HepG2 (cell line): ENCODE measurements at regions of chr20 and their contacts with region 1.

Region 1: DNA sequence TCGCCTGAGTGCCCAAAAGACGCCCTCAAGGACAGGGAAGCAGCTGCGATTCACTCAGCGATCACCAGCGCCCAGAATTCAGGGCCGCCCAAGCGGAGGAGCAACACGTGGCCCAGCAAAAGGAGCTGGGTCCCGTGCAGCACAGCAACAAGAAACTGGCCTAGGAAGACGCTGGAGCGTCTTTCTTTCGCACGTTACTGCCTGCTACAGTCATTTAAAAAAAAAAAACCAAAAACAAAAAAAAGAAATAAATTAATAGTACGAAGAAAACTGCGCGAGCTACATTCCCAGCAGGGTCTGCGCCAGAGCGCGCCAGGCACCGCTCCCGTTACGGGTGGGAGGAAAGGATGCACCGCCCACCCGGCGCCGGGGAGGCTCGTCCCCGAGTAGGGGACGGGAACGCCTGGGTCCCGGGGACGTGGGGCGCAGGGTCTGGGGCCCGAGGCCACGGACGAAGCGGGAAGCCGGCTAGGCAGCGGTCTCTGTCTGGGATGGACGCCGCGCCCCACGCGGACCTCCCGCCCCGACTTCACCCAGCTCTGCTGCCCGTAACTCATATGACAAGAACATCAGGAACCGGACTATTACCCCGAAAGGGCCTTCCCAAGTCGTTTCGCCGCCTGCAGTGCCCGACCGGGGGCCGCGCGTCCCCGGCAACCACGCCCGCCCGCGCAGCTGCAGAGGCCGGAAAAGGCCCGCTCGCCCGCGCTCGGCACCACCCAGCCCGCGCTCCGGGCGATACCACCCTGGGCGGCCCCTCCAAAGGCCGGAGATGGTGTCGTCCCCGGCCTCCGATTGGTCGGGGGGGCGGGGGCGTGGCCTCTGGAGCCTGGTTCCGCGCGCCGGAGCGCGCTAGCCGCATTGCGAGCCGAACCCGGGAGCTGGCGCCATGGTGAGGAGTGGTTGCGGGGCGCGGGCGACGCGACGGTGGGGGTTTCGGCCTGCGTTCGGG is at the start of gene NOP56:
- DNase-seq: peak; percentile 88
- ATAC-seq: peak; percentile 93
- H3K4me3 ChIP-seq: peak within 1 kb of the TSS; percentile 83 to 97 (median 94)
- H3K27ac ChIP-seq: peak within 1 kb of the TSS; percentile 90
- H3K4me1 ChIP-seq: peaks cover 43% of the 10 kb centered on the region
- H3K27me3 ChIP-seq: no peaks in the 10 kb centered on the region; a peak in 1 of 5 replicates
- CTCF ChIP-seq: no peak; the same call in 1 of the 2 replicates
- EP300 ChIP-seq: peak in 1 of 2 experiments; percentile 50; a peak in 2 of 4 replicates
- POLR2A ChIP-seq: peak; percentile 91 to 99
- RAD21 ChIP-seq: peak; percentile 59
- total RNA-seq, gene NOP56: 646 and 1,116 TPM in 2 replicates

Region 2: DNA sequence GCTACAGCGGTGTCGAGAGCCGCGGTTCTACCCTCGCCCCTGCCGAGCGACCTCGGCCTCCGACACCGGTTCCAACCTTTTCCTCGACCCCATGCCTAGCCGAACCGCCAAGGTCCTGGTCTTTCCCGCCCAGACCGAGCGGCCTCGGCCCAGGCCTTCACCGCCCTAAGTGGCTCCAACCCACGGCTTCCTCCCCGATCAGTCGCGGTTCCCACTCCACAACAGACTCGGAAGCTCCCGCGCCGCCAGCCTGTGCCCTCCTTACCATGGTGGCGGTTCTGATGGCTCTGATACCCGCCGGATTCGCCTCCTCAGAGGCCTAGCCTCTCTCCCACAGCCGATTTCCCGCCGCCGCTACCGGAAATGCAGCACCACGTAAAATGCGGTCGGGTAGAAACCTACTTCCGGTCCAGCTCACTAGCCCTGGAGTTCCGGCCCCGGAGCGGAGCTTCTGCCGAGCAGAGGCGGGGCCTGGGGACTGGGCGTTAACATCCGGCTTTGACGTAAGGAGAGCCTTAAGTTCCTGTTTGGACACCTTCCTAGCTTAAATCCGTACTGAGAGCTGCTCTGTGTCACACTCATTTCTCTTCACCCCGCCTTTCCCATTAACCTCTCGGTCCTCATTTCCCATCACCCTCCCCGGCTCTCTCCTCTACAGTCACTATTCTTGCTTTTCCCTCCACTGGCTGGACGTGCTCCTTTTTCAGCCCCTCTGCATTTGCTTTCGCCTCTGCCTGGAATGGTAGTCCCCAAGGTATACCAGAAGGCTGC is 181.4 kb before region 1 on chr20 and contains the start of gene SNRPB:
- CTCF ChIA-PET with region 1: no interaction called
- POLR2A ChIA-PET with region 1: interaction called, 34 read pairs
- in situ Hi-C with region 1: no loop called
- intact Hi-C with region 1: loop called (anchors 5 kb)
- DNase-seq: peak; percentile 99
- ATAC-seq: peak; percentile 98
- H3K4me3 ChIP-seq: peak within 1 kb of the TSS; percentile 89 to 93 (median 90)
- H3K27ac ChIP-seq: peak within 1 kb of the TSS; percentile 89
- H3K4me1 ChIP-seq: peaks cover 52% of the 10 kb centered on the region
- H3K27me3 ChIP-seq: no peaks in the 10 kb centered on the region; a peak in 1 of 5 replicates
- CTCF ChIP-seq: peak; percentile 31
- EP300 ChIP-seq: peak; percentile 16 to 73; a peak in 2 of 4 replicates
- POLR2A ChIP-seq: peak; percentile 99 to 100
- RAD21 ChIP-seq: peak; percentile 71
- total RNA-seq, gene SNRPB: 778 and 844 TPM in 2 replicates

Region 3: GRCh38 chr20:2508631-2509467 is 143.2 kb before region 1 on chr20 and contains the start of gene ZNF343:
- CTCF ChIA-PET with region 1: no interaction called
- POLR2A ChIA-PET with region 1: interaction called, 11 read pairs
- in situ Hi-C with region 1: no loop called
- intact Hi-C with region 1: loop called (anchors 5 kb)
- DNase-seq: peak; percentile 95
- ATAC-seq: peak; percentile 98
- H3K4me3 ChIP-seq: peak within 1 kb of the TSS; percentile 88 to 96 (median 91)
- H3K27ac ChIP-seq: peak within 1 kb of the TSS; percentile 79
- H3K4me1 ChIP-seq: peaks cover 23% of the 10 kb centered on the region
- H3K27me3 ChIP-seq: peaks cover 2 to 5% of the 10 kb centered on the region in 2 experiments; a peak in 3 of 5 replicates
- CTCF ChIP-seq: peak; percentile 44
- EP300 ChIP-seq: no peak; a peak in 1 of 4 replicates
- POLR2A ChIP-seq: peak; percentile 94 to 95
- RAD21 ChIP-seq: peak; percentile 33; the same call in 1 of the 2 replicates
- total RNA-seq, gene ZNF343: 22.1 and 28.8 TPM in 2 replicates

Region 4: DNA sequence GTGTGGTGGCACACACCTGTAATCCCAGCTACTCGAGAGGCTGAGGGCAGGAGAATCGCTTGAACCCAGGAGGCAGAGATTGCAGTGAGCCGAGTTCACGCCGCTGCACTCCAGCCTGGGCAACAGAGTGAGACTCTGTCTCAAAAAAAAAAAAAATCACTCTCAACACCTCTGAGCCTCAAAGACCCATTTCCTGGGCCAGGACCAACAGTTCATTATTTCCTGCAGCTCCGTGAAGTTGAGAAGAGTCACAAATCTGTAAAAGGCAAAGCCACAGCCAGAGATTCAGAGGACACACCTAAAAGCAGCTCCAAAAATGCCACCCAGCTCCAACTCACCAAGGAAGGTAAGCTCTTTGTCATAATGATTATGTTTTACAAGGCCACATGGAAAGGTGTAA is 14.8 kb before region 1 on chr20:
- CTCF ChIA-PET with region 1: no interaction called
- POLR2A ChIA-PET with region 1: interaction called, 15 read pairs
- in situ Hi-C with region 1: no loop called
- intact Hi-C with region 1: no loop called
- DNase-seq: no peak
- ATAC-seq: no peak
- H3K4me3 ChIP-seq: no peak overlapping the region
- H3K27ac ChIP-seq: no peak overlapping the region
- H3K4me1 ChIP-seq: no peaks in the 10 kb centered on the region
- H3K27me3 ChIP-seq: peaks cover 0 to 12% of the 10 kb centered on the region in 2 experiments; a peak in 2 of 5 replicates
- CTCF ChIP-seq: no peak
- EP300 ChIP-seq: no peak
- POLR2A ChIP-seq: no peak
- RAD21 ChIP-seq: no peak

Region 5: GRCh38 chr20:2688041-2688591 is 36.1 kb after region 1 on chr20:
- CTCF ChIA-PET with region 1: no interaction called
- POLR2A ChIA-PET with region 1: interaction called, 10 read pairs
- in situ Hi-C with region 1: no loop called
- intact Hi-C with region 1: no loop called
- DNase-seq: no peak
- ATAC-seq: peak; percentile 31; the same call in 2 of the 3 replicates
- H3K4me3 ChIP-seq: peak overlapping the region in 1 of 3 experiments; percentile 18; a peak in 1 of 6 replicates
- H3K27ac ChIP-seq: no peak overlapping the region
- H3K4me1 ChIP-seq: peaks cover 16% of the 10 kb centered on the region
- H3K27me3 ChIP-seq: peaks cover 15 to 68% of the 10 kb centered on the region in 2 experiments
- CTCF ChIP-seq: peak; percentile 74
- EP300 ChIP-seq: no peak
- POLR2A ChIP-seq: no peak
- RAD21 ChIP-seq: peak; percentile 70